ENCODE measurements at regions of chr1 and their contacts with region 1.

Region 1: GRCh38 chr1:150051089-150051373 is 16.5 kb upstream of the VPS45 start:
- DNase-seq: no peak
- H3K4me3 ChIP-seq: no peak overlapping the region
- H3K27ac ChIP-seq: no peak overlapping the region
- H3K4me1 ChIP-seq: no peaks in the 10 kb centered on the region
- H3K27me3 ChIP-seq: no peaks in the 10 kb centered on the region
- CTCF ChIP-seq: no peak
- POLR2A ChIP-seq: no peak

Region 2: GRCh38 chr1:149942207-149942606 is 108.8 kb before region 1 on chr1:
- CTCF ChIA-PET with region 1: interaction called, 12 read pairs
- POLR2A ChIA-PET with region 1: no interaction called
- dilution Hi-C with region 1: no loop called
- intact Hi-C with region 1: no loop called
- DNase-seq: peak; percentile 57
- H3K4me3 ChIP-seq: no peak overlapping the region
- H3K27ac ChIP-seq: no peak overlapping the region
- H3K4me1 ChIP-seq: peaks cover 22% of the 10 kb centered on the region
- H3K27me3 ChIP-seq: no peaks in the 10 kb centered on the region
- CTCF ChIP-seq: peak in 1 of 2 donors; percentile 39
- POLR2A ChIP-seq: no peak

Region 3: DNA sequence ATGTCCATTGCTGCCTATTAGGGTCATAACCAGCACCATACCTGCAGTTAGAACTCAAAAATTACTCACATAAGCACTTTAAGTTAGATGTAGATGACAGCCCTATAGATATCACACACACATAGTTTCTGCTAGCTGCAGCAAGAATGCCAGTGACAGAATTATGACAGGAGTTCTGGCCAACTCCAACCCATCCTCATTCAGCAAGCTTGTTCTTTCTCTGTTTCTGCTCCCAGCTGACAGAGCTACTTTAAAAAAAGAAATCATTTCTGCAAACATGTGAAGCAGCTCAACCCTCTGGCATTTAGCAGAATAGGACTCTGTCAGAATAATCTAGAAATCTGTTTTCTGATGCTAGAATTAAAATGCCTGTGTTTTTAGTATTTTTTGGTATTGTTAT is 16.7 kb before region 1 on chr1:
- CTCF ChIA-PET with region 1: interaction called, 19 read pairs
- POLR2A ChIA-PET with region 1: no interaction called
- dilution Hi-C with region 1: no loop called
- intact Hi-C with region 1: no loop called
- DNase-seq: no peak
- H3K4me3 ChIP-seq: no peak overlapping the region
- H3K27ac ChIP-seq: no peak overlapping the region
- H3K4me1 ChIP-seq: no peaks in the 10 kb centered on the region
- H3K27me3 ChIP-seq: no peaks in the 10 kb centered on the region
- CTCF ChIP-seq: no peak
- POLR2A ChIP-seq: no peak

Measured in endothelial cell of umbilical vein (primary cell).